OCI-LY7 (cell line): ENCODE measurements at regions of chr19 and their contacts with region 1.

Region 1: DNA sequence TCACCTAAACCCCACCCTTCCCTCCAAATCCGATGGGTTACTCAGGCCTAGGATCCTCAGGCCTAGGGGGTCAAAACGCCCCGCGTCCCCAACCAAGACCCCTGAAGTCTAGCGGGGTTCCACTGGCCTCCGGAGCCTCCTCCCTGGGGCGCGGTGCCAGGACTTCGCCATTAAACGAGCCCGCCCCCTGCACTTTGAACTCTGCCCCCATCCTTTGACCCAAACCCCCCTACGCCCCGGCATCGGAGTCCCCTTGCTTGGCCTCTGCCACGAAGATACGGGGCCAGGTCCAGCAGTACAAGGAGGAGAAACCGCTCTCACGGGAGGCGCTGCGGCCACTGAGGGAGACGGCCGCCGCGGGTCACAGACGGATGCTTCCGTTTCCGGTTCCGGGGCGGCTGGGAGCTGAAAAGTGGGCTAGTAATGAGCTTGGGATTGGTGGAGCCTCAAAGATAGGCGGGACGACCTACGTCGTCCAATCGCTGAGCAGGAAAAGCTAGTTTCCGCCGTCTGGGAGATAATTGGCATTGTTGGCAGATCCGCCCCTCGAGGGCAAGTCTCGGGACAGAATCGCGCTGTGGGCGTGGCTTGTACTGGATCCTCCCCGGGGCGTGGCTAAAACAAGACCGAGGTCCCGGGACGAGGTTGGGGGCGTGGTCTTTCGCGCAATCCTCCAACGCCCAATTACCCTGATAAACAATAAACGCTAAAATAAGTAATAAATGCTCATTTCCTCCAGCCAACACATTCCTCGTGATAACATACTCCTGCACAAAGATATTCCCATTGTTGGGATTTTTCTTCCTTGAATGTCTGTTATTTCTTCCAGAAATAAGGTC is 5.7 kb upstream of the ZNF77 start:
- DNase-seq: peak; percentile 100
- H3K4me3 ChIP-seq: peak overlapping the region; percentile 96
- H3K27ac ChIP-seq: peak overlapping the region; percentile 71
- H3K4me1 ChIP-seq: peaks cover 19% of the 10 kb centered on the region
- CTCF ChIP-seq: no peak

Region 2: DNA sequence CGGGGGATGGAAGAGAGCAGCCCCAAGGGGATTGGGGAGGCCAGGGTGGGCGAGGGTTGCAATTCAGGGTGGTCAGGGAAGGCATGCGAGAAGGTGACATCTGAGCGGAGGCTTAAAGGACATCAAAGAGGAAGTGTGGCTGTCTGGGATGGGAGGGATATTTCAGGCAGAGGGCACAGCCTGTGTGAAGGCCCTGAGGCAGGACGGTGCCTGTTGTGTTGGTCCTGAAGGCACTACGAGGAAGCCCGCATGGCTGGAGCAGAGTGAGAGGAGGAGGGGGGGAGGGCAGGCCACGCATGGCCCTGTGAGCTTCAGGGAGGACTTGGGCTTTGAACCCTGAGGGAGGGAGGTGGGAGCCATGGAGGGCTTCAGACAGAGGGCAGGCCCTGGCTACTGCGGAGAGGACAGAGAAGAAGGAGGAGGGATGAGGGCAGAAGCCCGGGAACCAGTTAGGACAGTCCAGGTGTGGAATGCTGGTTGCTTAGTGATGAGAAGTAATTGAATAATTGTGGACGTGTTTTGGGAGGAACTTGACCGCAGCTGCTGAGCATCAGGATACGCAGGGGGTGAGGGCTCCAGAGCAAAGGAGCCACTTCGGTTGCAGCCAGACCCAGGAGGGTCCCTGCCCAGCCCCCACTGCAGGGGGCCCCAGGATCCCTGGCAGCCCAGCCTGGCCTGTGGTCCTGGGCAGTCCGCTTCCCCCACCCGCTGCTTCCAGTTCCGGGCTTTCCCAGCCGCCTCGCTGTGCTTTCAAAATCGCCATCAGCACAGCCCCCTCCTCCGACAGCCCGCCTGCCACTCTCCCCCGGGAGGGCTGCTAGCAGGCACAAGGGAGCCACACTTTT is 33.1 kb after region 1 on chr19:
- CTCF ChIA-PET with region 1: no interaction called
- POLR2A ChIA-PET with region 1: no interaction called
- intact Hi-C with region 1: no loop called
- DNase-seq: peak; percentile 58
- H3K4me3 ChIP-seq: peak overlapping the region; percentile 42
- H3K27ac ChIP-seq: no peak overlapping the region
- H3K4me1 ChIP-seq: peaks cover 14% of the 10 kb centered on the region
- CTCF ChIP-seq: no peak

Region 3: GRCh38 chr19:3125900-3126524 is 175.5 kb after region 1 on chr19:
- CTCF ChIA-PET with region 1: interaction called, 4 read pairs
- POLR2A ChIA-PET with region 1: interaction called, 4 read pairs
- intact Hi-C with region 1: loop called (anchors 5 kb)
- DNase-seq: peak; percentile 63
- H3K4me3 ChIP-seq: no peak overlapping the region
- H3K27ac ChIP-seq: no peak overlapping the region
- H3K4me1 ChIP-seq: peaks cover 12% of the 10 kb centered on the region
- CTCF ChIP-seq: peak; percentile 83